Right cardiac atrium (tissue), 5 donors: ENCODE measurements at regions of chr10 and their contacts with region 1.

Region 1: GRCh38 chr10:128069351-128070051 is 56.7 kb downstream of the MKI67 start:
- DNase-seq: peak; percentile 69 to 88 (median 76)
- ATAC-seq: peak; percentile 70 to 76
- H3K4me3 ChIP-seq: no peak overlapping the region
- H3K27ac ChIP-seq: no peak overlapping the region
- H3K4me1 ChIP-seq: no peaks in the 10 kb centered on the region
- H3K27me3 ChIP-seq: no peaks in the 10 kb centered on the region

Region 2: GRCh38 chr10:126955934-126956711 is 1113.4 kb before region 1 on chr10:
- intact Hi-C with region 1: no loop called
- DNase-seq: no peak
- ATAC-seq: peak in 1 of 2 donors; percentile 12
- H3K4me3 ChIP-seq: no peak overlapping the region
- H3K27ac ChIP-seq: no peak overlapping the region
- H3K4me1 ChIP-seq: no peaks in the 10 kb centered on the region
- H3K27me3 ChIP-seq: no peaks in the 10 kb centered on the region

Region 3: DNA sequence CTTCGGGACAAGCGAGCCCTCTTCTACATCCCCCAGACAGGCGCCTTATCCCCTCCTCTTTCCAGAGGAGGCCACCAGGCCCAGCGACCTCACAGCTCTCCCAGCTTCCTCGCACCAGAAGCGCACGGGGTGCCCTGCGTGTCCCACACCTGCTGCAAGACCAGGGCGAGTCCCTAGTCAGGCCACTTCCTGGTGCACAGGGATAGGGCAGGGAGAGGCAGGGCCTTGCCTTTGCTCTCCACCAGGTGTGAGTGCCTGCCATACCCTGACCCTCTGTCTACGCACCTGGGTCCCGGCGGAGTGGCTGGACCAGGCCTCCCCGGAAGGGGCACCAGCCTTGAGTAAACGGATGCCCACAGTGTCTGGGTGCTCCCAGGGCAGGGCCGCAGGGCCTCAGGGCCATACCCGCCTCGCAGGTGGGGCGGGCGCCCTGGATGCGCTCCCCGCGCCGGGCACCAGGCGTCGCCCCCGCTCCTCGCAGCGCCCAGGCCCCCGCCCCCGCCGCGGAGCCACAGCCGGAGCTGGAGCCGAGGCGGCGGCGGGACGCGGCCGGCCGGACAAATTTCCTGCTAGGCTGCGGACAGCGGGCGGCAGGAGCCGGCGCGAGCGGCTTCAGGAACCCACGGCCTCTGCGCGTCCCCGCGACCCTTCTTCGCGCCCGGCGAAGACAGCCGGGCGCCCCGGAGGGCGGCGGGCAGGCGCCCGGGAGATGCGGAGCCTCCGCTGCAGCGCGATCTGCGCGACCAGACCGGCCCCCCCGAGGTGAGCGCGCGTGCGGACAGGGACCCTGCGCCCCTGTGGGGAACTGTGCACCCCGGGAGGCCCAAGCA is 162.7 kb before region 1 on chr10 and contains the start of gene PTPRE:
- intact Hi-C with region 1: loop called (anchors 2 to 10 kb)
- DNase-seq: peak; percentile 79 to 91 (median 90)
- ATAC-seq: peak; percentile 87 to 93
- H3K4me3 ChIP-seq: peak within 1 kb of the TSS; percentile 74
- H3K27ac ChIP-seq: peak within 1 kb of the TSS; percentile 55
- H3K4me1 ChIP-seq: peaks cover 8% of the 10 kb centered on the region
- H3K27me3 ChIP-seq: no peaks in the 10 kb centered on the region
- total RNA-seq, gene PTPRE: 11.2 to 21.1 (median 13.8) TPM

Region 4: DNA sequence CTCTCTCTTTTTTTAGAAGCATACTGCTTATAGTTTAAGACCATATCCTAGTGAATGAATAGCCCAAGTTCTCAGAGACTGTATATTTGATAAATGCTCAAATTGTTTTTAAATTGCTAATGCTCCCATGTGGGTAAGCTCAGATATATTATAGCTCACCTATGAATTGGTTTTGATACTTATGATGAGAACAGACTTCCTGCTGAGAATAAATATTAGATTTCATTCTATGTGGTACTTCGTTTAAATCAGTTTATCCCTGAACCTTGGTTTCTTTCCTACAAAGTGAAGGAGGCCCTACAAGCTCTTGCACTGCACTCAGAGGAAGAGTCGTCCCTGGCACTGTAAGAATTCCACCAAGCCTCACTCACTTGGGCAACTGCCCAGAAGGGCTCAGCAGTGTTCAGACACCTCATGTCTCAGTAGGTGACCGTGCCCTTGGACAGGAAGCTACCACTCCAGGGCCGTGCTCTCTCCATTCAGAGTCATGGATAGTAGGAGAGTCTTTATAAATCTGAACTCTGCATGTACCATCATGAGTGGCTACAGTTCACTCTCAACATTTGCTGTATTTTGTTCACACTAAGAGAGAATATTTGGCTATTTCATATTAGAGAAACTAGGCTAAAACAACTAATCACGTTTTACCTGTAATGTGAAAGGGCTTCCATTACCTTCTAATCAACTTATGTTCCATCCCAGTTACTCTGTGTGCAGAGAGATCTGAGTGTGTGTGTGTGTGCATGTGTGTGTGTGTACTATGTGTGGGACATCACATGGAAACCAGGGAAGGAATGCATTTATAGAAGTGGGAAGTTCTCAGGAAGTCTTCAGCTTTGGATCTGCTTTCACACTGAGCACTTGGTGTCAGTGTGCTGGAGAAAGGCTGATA is 68.8 kb before region 1 on chr10:
- intact Hi-C with region 1: no loop called
- DNase-seq: peak; percentile 55 to 73 (median 67)
- ATAC-seq: peak; percentile 78 to 83
- H3K4me3 ChIP-seq: no peak overlapping the region
- H3K27ac ChIP-seq: peak overlapping the region; percentile 87
- H3K4me1 ChIP-seq: peaks cover 9% of the 10 kb centered on the region
- H3K27me3 ChIP-seq: no peaks in the 10 kb centered on the region

Region 5: GRCh38 chr10:128011175-128011979 is 58.1 kb before region 1 on chr10:
- intact Hi-C with region 1: loop called in 2 of 4 experiments (anchors 10 kb)
- DNase-seq: peak; percentile 80 to 93 (median 92)
- ATAC-seq: peak; percentile 86 to 92
- H3K4me3 ChIP-seq: no peak overlapping the region
- H3K27ac ChIP-seq: no peak overlapping the region
- H3K4me1 ChIP-seq: no peaks in the 10 kb centered on the region
- H3K27me3 ChIP-seq: no peaks in the 10 kb centered on the region

Region 6: GRCh38 chr10:128035557-128035973 is 33.9 kb before region 1 on chr10:
- intact Hi-C with region 1: loop called in 2 of 4 experiments (anchors 2 to 5 kb)
- DNase-seq: peak; percentile 55 to 77 (median 70)
- ATAC-seq: peak; percentile 61 to 74
- H3K4me3 ChIP-seq: no peak overlapping the region
- H3K27ac ChIP-seq: no peak overlapping the region
- H3K4me1 ChIP-seq: peaks cover 5% of the 10 kb centered on the region
- H3K27me3 ChIP-seq: no peaks in the 10 kb centered on the region

Region 7: GRCh38 chr10:128147064-128147463 is 77.6 kb after region 1 on chr10:
- intact Hi-C with region 1: loop called in 1 of 4 experiments (anchors 10 kb)
- DNase-seq: no peak
- ATAC-seq: no peak
- H3K4me3 ChIP-seq: no peak overlapping the region
- H3K27ac ChIP-seq: no peak overlapping the region
- H3K4me1 ChIP-seq: no peaks in the 10 kb centered on the region
- H3K27me3 ChIP-seq: no peaks in the 10 kb centered on the region

Region 8: GRCh38 chr10:129140921-129141885 is 1071.7 kb after region 1 on chr10:
- intact Hi-C with region 1: no loop called
- DNase-seq: peak in 1 of 3 donors; percentile 35
- ATAC-seq: no peak
- H3K4me3 ChIP-seq: no peak overlapping the region
- H3K27ac ChIP-seq: no peak overlapping the region
- H3K4me1 ChIP-seq: no peaks in the 10 kb centered on the region
- H3K27me3 ChIP-seq: no peaks in the 10 kb centered on the region